ENCODE measurements at regions of chr19 and their contacts with region 1.

Region 1: DNA sequence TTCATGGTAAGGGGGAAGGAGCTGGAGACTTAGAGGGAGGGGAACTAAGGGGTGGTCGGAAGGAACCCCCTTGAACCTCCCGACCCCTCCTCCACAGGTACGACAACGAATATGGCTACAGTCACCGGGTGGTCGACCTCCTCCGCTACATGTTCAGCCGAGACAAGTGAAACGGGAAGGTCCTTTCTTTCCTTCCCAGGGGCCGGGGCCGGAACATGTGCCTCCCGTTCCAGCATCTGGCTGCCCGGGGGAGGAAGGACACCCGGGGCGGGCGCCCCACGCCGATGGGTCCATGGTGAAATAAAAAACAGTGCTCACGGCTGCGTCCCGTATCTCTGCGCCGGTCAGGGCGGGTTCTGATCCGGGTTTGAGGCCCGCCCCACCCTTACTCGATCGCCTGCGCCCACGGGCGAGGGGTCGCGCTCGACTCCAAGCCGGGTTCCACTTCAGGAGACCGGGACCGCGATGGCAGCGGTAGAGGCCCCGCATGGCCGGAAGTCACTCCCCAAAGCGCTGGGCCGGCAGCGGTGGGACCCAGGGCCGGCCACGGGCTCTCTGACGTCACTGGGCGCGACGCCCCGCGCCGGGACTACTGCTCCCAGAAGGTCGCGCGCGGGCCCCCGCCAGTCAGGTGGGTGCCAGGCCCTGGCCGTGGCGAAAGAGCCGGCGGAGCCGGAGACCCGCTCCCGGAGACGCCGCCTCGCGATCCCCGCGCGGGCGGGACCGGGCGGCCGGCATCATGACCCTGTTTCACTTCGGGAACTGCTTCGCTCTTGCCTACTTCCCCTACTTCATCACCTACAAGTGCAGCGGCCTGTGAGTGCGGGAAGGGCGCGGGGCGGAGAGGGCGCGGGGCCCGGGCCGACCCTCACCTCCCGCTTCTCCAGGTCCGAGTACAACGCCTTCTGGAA is at the start of gene TMEM147:
- DNase-seq: peak; percentile 90
- H3K4me3 Mint-ChIP-seq: peak within 1 kb of the TSS; percentile 93
- H3K27ac Mint-ChIP-seq: peak within 1 kb of the TSS; percentile 91
- H3K4me1 Mint-ChIP-seq: peaks cover 35% of the 10 kb centered on the region
- H3K27me3 Mint-ChIP-seq: no peaks in the 10 kb centered on the region
- total RNA-seq, gene TMEM147: 73.5 to 81.9 TPM

Region 2: GRCh38 chr19:35293363-35293739 is 251.9 kb before region 1 on chr19:
- CTCF ChIA-PET with region 1: no interaction called
- POLR2A ChIA-PET with region 1: no interaction called
- intact Hi-C with region 1: no loop called
- DNase-seq: no peak
- H3K4me3 Mint-ChIP-seq: no peak overlapping the region
- H3K27ac Mint-ChIP-seq: no peak overlapping the region
- H3K4me1 Mint-ChIP-seq: peaks cover 4% of the 10 kb centered on the region
- H3K27me3 Mint-ChIP-seq: no peaks in the 10 kb centered on the region

Region 3: GRCh38 chr19:35468637-35469036 is 76.6 kb before region 1 on chr19:
- CTCF ChIA-PET with region 1: no interaction called
- POLR2A ChIA-PET with region 1: no interaction called
- intact Hi-C with region 1: no loop called
- DNase-seq: peak; percentile 77
- H3K4me3 Mint-ChIP-seq: no peak overlapping the region
- H3K27ac Mint-ChIP-seq: peak overlapping the region; percentile 20
- H3K4me1 Mint-ChIP-seq: peaks cover 7% of the 10 kb centered on the region
- H3K27me3 Mint-ChIP-seq: no peaks in the 10 kb centered on the region

Region 4: GRCh38 chr19:35509861-35510625 is 35.2 kb before region 1 on chr19:
- CTCF ChIA-PET with region 1: interaction called, 8 read pairs
- POLR2A ChIA-PET with region 1: no interaction called
- intact Hi-C with region 1: loop called (anchors 5 kb)
- DNase-seq: peak; percentile 81
- H3K4me3 Mint-ChIP-seq: peak overlapping the region; percentile 62
- H3K27ac Mint-ChIP-seq: no peak overlapping the region
- H3K4me1 Mint-ChIP-seq: peaks cover 13% of the 10 kb centered on the region
- H3K27me3 Mint-ChIP-seq: peaks cover 29% of the 10 kb centered on the region

Region 5: GRCh38 chr19:35592226-35592625 is 47.0 kb after region 1 on chr19:
- CTCF ChIA-PET with region 1: interaction called, 34 read pairs
- POLR2A ChIA-PET with region 1: interaction called, 3 read pairs
- intact Hi-C with region 1: loop called (anchors 2 kb)
- DNase-seq: peak; percentile 30
- H3K4me3 Mint-ChIP-seq: no peak overlapping the region
- H3K27ac Mint-ChIP-seq: no peak overlapping the region
- H3K4me1 Mint-ChIP-seq: peaks cover 5% of the 10 kb centered on the region
- H3K27me3 Mint-ChIP-seq: peaks cover 3% of the 10 kb centered on the region

Region 6: DNA sequence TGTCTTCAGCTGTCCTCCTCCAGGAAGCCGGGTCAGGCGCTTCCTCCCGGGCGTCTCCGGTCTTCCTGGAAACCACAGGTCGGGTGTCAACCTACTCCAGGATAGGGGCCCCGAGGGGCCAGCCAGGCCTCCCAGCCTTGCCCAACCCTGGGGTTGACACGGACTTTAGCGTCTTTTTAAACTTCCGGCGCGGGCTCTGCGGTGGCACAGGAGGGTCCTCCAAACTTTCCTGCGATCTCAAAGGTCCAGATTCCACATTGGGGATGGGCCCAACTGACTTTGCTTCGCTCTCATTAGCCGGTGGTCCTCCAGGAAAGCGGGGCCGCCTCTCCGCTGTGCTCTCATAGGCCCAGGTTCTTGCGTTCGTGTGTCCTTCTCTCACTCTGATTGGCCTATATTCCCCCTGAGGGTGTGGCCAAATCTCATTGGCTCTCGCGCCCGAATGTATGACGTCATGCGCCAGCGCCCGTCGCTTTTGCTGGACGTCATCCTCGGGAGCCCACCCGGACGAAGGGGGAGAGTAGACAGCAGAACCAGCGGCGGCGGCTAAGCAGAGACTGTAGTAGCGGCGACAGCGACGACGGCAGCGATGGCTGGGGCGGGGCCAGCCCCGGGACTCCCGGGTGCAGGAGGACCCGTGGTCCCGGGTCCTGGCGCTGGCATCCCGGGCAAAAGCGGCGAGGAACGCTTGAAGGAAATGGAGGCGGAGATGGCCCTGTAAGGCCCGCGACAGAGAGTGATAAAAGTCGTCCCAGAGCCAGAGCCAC is 83.5 kb after region 1 on chr19 and contains the start of gene RBM42:
- CTCF ChIA-PET with region 1: no interaction called
- POLR2A ChIA-PET with region 1: no interaction called
- intact Hi-C with region 1: loop called (anchors 1 kb)
- DNase-seq: peak; percentile 98
- H3K4me3 Mint-ChIP-seq: peak within 1 kb of the TSS; percentile 99
- H3K27ac Mint-ChIP-seq: peak within 1 kb of the TSS; percentile 90
- H3K4me1 Mint-ChIP-seq: peaks cover 16% of the 10 kb centered on the region
- H3K27me3 Mint-ChIP-seq: no peaks in the 10 kb centered on the region
- total RNA-seq, gene RBM42: 86.4 to 88.0 TPM

Region 7: DNA sequence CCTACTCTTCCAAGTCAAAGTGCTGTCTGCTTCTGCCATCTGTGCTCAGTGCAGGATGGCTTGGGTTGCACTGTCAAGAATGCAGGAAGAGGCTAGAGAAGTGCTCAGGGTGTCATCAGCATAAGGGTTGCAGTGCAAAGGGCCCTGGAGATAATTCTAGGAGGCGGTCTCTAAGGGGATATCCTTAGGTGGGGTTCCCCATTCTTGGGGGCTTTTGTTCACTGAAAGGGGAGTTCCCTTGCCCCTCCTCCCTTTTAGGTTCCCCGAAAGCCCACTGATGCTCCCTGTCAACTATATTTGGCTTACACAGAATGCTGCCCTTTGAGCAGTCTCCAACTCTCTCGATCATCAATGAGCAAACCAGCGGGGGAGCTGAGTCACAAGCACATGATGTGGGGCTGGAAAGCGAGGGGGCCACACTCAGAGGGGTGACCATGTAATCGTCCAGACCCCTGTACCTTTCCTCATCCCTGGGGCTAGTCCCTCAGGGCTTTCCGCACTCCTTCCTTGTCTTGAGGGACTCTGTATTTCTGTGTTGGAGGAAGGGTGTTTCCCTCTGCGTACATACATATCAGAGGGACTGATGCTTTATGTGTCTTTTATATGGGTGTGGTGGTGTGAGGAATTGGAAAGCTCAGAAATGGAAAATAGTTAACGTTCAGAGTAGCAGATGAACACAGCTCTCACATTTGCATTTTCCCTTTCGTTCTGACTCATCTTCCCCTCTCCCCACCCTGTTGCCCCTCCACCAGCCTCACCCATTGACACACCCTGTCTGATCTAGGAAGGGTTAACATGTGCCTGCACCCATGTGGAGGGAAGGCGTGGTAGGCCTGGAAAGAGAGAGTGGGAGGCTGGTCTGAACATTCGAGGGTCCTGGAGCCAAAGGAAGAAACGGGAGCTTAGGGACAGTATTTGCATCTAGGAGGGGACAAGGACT is 165.8 kb after region 1 on chr19:
- CTCF ChIA-PET with region 1: no interaction called
- POLR2A ChIA-PET with region 1: no interaction called
- intact Hi-C with region 1: loop called (anchors 1 kb)
- DNase-seq: peak; percentile 87
- H3K4me3 Mint-ChIP-seq: peak overlapping the region; percentile 54
- H3K27ac Mint-ChIP-seq: peak overlapping the region; percentile 99
- H3K4me1 Mint-ChIP-seq: peaks cover 49% of the 10 kb centered on the region
- H3K27me3 Mint-ChIP-seq: no peaks in the 10 kb centered on the region

Region 8: DNA sequence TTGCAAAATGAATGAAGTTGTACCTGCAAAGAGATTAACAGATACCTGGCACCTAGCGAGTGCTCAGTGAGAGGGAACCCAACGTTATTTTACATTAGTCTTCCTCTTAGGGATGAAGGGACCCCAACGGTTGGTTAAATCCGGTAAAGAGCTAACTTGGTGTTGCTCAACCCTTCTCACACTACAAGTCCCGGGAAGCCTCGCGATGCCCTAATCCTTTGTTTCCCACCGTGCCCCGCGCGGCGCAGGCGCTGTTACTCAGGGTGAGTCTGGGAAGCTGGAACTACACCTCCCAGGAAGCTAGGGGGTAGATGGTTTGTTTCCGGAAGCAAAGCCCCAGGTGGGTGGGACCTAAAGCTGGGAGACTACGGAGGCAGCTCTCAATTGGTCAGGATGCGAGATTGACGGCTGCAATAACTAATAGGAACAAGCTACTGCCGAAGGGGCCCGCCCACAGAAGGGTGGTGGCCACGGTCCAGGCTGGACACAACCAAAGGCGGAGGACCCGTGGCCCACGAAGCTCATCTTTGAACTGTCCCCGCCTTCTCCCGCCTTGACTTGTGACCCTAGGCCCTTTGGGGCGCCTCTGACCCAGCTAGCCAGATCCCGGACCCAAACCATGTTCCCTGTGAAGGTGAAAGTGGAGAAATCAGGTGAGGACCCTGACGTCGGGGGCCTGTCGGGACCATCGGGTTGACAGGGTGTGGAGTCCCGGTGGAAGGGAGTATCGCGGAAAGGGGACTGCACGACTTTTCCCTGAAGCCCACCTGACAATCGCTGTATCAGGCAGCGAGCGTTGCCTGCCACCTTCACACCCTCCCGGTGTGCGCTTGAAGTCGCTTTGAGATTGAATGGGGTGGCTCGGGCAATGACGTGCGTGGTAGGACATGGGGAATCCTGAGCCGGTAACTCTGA is 203.1 kb after region 1 on chr19 and contains the start of gene LIN37:
- CTCF ChIA-PET with region 1: interaction called, 3 read pairs
- POLR2A ChIA-PET with region 1: no interaction called
- intact Hi-C with region 1: loop called (anchors 5 kb)
- DNase-seq: peak; percentile 99
- H3K4me3 Mint-ChIP-seq: peak within 1 kb of the TSS; percentile 94
- H3K27ac Mint-ChIP-seq: peak within 1 kb of the TSS; percentile 88
- H3K4me1 Mint-ChIP-seq: peaks cover 42% of the 10 kb centered on the region
- H3K27me3 Mint-ChIP-seq: no peaks in the 10 kb centered on the region
- total RNA-seq, gene LIN37: 7.5 TPM